BJ (cell line): ENCODE measurements at regions of chr10 and their contacts with region 1.

Region 1: GRCh38 chr10:35379226-35380137 is 43.2 kb downstream of the CCNY start:
- DNase-seq: no peak
- H3K4me3 ChIP-seq: no peak overlapping the region
- H3K27me3 ChIP-seq: no peaks in the 10 kb centered on the region
- CTCF ChIP-seq: no peak

Region 2: DNA sequence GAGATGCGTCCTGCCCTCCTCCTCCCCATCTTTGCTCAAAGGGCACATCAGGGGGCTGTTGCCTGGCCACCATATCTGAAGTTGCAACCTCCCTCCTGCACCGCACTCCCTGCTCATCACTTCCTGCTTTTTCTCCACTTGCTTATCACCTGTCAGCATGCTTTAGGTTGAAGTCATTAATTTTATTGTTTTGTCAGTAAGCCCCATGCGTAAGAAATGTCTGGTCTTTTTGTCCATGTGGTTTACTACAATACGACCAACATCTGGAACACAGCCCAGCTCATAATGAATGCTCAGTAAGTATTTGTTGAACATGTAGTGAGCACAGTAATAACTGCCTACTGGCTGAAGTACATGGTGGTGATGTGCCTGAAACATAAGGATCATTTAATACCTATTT is 154.1 kb after region 1 on chr10:
- CTCF ChIA-PET with region 1: no interaction called
- POLR2A ChIA-PET with region 1: no interaction called
- DNase-seq: no peak
- H3K4me3 ChIP-seq: no peak overlapping the region
- H3K27me3 ChIP-seq: no peaks in the 10 kb centered on the region
- CTCF ChIP-seq: no peak

Region 3: GRCh38 chr10:35594115-35595079 is 214.9 kb after region 1 on chr10:
- CTCF ChIA-PET with region 1: no interaction called
- POLR2A ChIA-PET with region 1: interaction called, 15 read pairs
- DNase-seq: no peak
- H3K4me3 ChIP-seq: no peak overlapping the region
- H3K27me3 ChIP-seq: peaks cover 14% of the 10 kb centered on the region
- CTCF ChIP-seq: no peak